ENCODE measurements at regions of chr1 and their contacts with region 1.

Region 1: GRCh38 chr1:60564916-60565750 is 491.6 kb upstream of the C1orf87 start:
- DNase-seq: no peak
- H3K4me3 Mint-ChIP-seq: no peak overlapping the region
- H3K27ac Mint-ChIP-seq: no peak overlapping the region
- H3K4me1 Mint-ChIP-seq: peaks cover 29% of the 10 kb centered on the region
- H3K27me3 Mint-ChIP-seq: no peaks in the 10 kb centered on the region
- CTCF ChIP-seq: no peak

Region 2: DNA sequence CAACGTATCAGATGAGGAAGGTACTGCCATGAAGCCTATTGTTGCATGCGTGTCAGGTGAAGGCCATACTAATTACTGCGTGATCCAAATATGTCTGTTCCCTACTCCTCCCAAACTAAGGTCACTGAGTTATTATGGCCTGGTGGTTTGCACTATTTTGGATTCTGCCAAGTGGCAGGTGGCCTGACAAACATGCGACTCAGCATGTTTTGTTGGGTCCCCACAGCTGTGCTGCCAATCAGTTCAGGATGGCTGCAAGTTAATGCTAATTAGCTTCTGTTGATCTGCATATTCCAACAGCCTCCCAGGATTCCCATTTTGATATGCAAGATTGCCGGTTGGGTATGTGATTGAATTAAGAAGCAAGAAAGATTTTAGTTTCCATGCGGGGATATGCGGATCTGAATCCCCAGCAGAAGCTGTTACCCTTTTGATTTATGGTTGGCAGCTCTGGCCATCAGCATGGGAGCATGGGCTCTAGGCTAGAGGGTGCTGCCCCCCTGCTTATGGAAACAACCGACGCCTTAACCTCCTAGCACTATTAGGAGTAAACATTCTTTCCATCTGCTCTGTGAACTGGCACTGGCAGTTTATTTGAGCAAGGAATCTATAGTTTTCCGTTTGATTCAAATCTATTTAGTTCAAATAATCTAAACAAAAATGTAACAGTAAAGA is 61.7 kb before region 1 on chr1:
- CTCF ChIA-PET with region 1: no interaction called
- intact Hi-C with region 1: no loop called
- DNase-seq: no peak
- H3K4me3 Mint-ChIP-seq: no peak overlapping the region
- H3K27ac Mint-ChIP-seq: no peak overlapping the region
- H3K4me1 Mint-ChIP-seq: no peaks in the 10 kb centered on the region
- H3K27me3 Mint-ChIP-seq: no peaks in the 10 kb centered on the region
- CTCF ChIP-seq: no peak

Region 3: DNA sequence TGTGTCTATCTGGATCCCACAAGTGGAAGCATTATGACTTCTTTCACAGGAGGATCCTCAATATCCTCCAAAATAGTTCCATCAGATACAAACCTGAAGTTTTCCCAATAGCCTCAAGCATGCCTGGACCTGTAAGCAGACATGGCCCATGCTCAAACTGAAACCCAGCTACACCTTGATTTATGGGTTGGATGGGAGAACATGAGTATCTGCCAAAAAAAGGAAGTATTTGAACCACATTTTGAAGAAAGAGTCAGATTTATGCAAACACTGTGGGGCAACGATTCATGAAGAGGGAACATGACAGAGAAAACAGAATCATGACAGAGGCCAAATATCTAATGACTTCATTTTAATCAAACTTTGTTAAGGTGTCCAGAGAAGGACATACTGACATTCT is 166.2 kb after region 1 on chr1:
- CTCF ChIA-PET with region 1: no interaction called
- intact Hi-C with region 1: loop called (anchors 10 kb)
- DNase-seq: no peak
- H3K4me3 Mint-ChIP-seq: no peak overlapping the region
- H3K27ac Mint-ChIP-seq: no peak overlapping the region
- H3K4me1 Mint-ChIP-seq: peaks cover 10% of the 10 kb centered on the region
- H3K27me3 Mint-ChIP-seq: no peaks in the 10 kb centered on the region
- CTCF ChIP-seq: no peak

Region 4: DNA sequence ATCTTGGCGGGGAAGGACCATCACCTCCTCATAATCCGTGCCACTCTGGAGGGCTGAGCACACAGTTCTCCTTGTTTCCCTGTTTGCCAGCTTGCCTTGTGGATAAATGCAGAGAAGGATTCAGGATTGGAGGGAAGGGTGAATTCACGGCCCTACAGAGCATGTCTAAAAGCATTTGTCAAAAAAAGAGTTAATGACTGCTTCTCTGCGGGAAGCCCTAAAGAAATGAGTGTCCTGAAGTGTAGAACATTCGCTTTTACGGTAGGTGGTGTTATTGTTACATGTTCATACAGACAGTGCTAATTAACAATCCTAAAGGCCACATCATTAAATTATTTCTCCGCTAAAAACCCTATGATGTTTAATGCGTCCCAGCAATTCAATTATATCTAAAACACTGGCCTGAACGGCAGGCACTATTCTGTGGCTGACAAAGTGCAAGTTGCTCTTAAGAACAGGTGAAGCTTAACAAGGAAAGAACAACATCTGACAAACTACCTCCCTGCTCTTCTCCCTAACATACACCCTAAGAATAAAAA is 404.9 kb after region 1 on chr1:
- CTCF ChIA-PET with region 1: no interaction called
- intact Hi-C with region 1: loop called (anchors 10 kb)
- DNase-seq: no peak
- H3K4me3 Mint-ChIP-seq: no peak overlapping the region
- H3K27ac Mint-ChIP-seq: no peak overlapping the region
- H3K4me1 Mint-ChIP-seq: peaks cover 28% of the 10 kb centered on the region
- H3K27me3 Mint-ChIP-seq: peaks cover 11% of the 10 kb centered on the region
- CTCF ChIP-seq: no peak

Measured in Calu3 (cell line).